ENCODE measurements at regions of chr1 and their contacts with region 1.

Region 1: DNA sequence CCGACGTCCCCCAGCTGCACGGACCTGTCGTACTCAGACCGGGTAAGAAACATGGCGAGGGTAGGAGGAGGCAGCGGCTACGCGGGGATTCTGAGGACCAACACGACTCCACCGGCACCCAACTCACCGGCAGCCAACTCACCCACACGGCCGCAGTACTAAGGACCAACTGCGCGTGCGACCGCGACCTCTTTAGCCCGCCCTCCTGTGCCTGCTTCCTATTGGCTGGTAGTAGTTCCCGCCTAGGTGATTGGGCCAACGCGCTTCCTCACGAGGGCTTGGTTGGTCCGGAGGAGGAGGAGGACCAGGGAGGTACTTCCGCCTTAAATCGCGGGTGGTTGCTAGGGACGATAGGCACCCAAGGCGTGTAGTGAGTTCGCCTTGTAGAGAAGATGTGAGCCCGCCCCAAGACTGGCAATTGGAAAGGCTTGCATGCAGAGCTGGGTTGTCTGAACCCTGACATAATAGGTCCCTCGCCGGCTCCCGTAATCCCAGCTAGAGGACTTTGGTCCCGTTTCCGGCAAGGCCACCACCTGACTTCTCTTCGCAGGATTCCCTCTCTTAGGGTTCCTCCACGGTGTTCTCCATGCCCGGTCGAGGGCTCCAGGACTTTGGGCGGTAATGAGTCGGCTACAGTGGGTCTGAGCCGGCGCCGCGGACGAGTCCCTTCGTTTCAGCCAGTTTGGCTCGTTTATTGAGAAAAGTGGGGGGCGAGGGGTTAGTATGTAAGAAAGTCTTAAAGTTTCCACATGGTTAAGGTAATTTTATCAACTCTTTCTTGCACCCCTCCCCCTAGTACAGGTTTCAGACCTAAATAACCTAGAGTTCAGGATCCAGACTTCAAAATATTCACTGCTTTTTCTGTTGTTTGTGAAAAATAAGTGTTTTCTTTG is at the start of gene PSMA5:
- DNase-seq: peak; percentile 73 to 97 (median 95)
- ATAC-seq: peak; percentile 96
- H3K4me3 ChIP-seq: peak within 1 kb of the TSS; percentile 77
- H3K4me3 Mint-ChIP-seq: peak within 1 kb of the TSS; percentile 95 to 99 (median 98)
- H3K27ac ChIP-seq: peak within 1 kb of the TSS; percentile 91
- H3K27ac Mint-ChIP-seq: peak within 1 kb of the TSS; percentile 80 to 99 (median 98)
- H3K4me1 ChIP-seq: peaks cover 27 to 29% of the 10 kb centered on the region in 2 donors
- H3K4me1 Mint-ChIP-seq: peaks cover 29 to 46% (median 34%) of the 10 kb centered on the region in 7 donors
- H3K27me3 ChIP-seq: no peaks in the 10 kb centered on the region
- H3K27me3 Mint-ChIP-seq: no peaks in the 10 kb centered on the region
- total RNA-seq, gene PSMA5: 38.3 to 203 (median 70.7) TPM

Region 2: DNA sequence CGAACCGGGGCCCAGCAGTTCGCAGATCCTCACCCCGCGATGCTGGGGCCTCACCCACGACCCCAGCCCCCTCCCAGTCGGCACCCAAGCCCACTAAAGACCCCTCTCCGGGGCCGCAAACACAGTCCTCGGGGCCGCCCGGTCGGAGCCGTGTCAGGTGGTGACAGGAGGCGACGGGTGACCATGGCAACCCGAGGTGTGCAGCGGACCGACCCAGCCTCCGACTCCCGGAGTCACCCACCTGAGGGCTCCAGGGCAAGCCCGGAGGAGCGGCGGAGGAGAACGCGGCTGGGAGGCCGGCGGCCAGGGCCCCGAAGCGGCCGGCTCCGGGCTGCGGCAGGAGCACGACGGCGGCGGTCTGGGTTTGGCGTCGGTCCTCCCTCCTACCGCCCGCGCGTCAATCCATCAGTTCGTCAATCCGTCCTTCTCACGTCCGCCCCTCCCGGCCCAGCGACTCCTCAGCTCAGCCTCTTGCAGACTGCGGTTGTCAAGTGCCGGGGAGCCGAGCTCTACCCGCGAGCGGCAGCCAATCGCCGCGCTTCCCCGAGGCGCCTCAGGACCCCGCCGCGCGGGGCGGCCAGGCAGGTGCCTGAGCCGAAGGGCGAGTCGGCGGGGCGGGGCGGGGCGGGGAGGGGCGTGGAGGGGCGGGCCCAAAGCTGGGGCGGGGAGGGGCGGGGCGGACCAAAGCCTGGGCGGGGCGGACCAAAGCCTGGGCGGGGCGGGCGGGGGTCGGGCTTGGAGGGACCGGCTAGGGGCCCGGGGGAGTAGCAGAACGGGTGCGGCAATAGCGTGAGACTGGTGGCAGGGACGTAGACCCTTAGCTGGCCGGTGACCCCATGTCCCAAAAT is 384.7 kb before region 1 on chr1 and contains the start of gene WDR47:
- CTCF ChIA-PET with region 1: no interaction called
- POLR2A ChIA-PET with region 1: no interaction called
- intact Hi-C with region 1: loop called (anchors 1 kb)
- DNase-seq: peak; percentile 95 to 97 (median 96)
- ATAC-seq: peak; percentile 99
- H3K4me3 ChIP-seq: peak within 1 kb of the TSS; percentile 97
- H3K4me3 Mint-ChIP-seq: peak within 1 kb of the TSS; percentile 86 to 97 (median 94)
- H3K27ac ChIP-seq: peak within 1 kb of the TSS; percentile 90
- H3K27ac Mint-ChIP-seq: peak within 1 kb of the TSS; percentile 78 to 97 (median 91)
- H3K4me1 ChIP-seq: peaks cover 0 to 7% of the 10 kb centered on the region in 2 donors
- H3K4me1 Mint-ChIP-seq: peaks cover 7 to 25% (median 16%) of the 10 kb centered on the region in 7 donors
- H3K27me3 ChIP-seq: no peaks in the 10 kb centered on the region
- H3K27me3 Mint-ChIP-seq: peaks cover 0 to 7% (median 0%) of the 10 kb centered on the region in 5 donors
- total RNA-seq, gene WDR47: 9.8 to 15.4 (median 14.4) TPM

Region 3: GRCh38 chr1:109099938-109100773 is 326.4 kb before region 1 on chr1:
- CTCF ChIA-PET with region 1: no interaction called
- POLR2A ChIA-PET with region 1: no interaction called
- intact Hi-C with region 1: loop called in 1 of 2 experiments (anchors 1 kb)
- DNase-seq: peak; percentile 90 to 98 (median 97)
- ATAC-seq: peak; percentile 98
- H3K4me3 ChIP-seq: peak overlapping the region; percentile 80
- H3K4me3 Mint-ChIP-seq: peak overlapping the region; percentile 93 to 99 (median 98)
- H3K27ac ChIP-seq: peak overlapping the region; percentile 88
- H3K27ac Mint-ChIP-seq: peak overlapping the region; percentile 92 to 99 (median 96)
- H3K4me1 ChIP-seq: peaks cover 0 to 5% of the 10 kb centered on the region in 2 donors
- H3K4me1 Mint-ChIP-seq: peaks cover 5 to 22% (median 13%) of the 10 kb centered on the region in 7 donors
- H3K27me3 ChIP-seq: no peaks in the 10 kb centered on the region
- H3K27me3 Mint-ChIP-seq: peaks cover 0 to 2% (median 0%) of the 10 kb centered on the region in 5 donors

Region 4: DNA sequence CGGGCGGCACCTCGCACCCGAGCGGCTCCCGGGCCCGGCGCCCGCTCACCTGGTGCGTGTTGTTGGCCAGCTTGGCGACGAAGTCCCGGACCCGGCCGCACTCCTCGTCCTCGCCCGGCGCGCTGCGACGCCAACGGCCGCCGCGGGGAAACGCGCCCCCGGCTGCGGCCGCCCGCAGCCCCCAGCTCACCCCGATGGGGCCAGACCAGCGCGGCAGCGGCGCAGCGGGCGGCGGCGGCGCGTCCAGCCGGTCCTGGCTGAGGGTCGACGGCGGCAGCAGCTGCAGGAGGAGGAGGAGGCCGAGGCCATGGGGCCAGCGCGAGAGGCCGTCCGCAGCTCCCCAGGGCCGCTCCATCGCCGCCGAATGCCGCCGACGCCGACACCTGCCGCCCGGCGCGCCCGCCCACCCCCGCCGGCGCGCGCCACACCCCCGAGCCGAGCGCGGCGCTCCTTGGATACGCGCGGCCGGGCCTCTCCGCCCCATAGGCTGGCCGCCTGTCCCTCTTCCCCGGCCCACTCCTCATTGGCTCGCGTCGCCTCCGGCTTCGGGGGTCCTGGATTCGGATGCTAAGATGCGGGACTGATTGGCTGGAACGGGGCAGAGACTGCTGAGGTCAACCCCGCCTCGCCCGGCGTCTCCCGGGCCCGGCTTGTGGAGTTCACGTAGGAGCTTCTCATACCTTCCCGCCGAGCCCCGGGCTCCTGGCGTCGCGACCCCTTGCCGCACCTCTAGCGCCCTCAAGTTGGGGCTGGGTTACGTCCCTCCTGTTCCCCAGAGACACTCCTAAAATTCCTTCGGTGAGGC is 28.8 kb before region 1 on chr1 and contains the start of gene SORT1:
- CTCF ChIA-PET with region 1: interaction called, 3 read pairs
- POLR2A ChIA-PET with region 1: no interaction called
- intact Hi-C with region 1: loop called in 1 of 2 experiments (anchors 1 kb)
- DNase-seq: peak; percentile 29 to 67 (median 43)
- ATAC-seq: peak; percentile 94
- H3K4me3 ChIP-seq: peak within 1 kb of the TSS; percentile 37
- H3K4me3 Mint-ChIP-seq: peak within 1 kb of the TSS; percentile 80 to 90 (median 86)
- H3K27ac ChIP-seq: no peak within 1 kb of the TSS
- H3K27ac Mint-ChIP-seq: peak within 1 kb of the TSS in 2 of 9 donors; percentile 43 to 74
- H3K4me1 ChIP-seq: peaks cover 0 to 6% of the 10 kb centered on the region in 2 donors
- H3K4me1 Mint-ChIP-seq: peaks cover 0 to 30% (median 16%) of the 10 kb centered on the region in 7 donors
- H3K27me3 ChIP-seq: peaks cover 0 to 18% of the 10 kb centered on the region in 2 donors
- H3K27me3 Mint-ChIP-seq: peaks cover 36 to 51% (median 41%) of the 10 kb centered on the region in 5 donors
- total RNA-seq, gene SORT1: 1.0 to 25.6 (median 1.8) TPM

Region 5: DNA sequence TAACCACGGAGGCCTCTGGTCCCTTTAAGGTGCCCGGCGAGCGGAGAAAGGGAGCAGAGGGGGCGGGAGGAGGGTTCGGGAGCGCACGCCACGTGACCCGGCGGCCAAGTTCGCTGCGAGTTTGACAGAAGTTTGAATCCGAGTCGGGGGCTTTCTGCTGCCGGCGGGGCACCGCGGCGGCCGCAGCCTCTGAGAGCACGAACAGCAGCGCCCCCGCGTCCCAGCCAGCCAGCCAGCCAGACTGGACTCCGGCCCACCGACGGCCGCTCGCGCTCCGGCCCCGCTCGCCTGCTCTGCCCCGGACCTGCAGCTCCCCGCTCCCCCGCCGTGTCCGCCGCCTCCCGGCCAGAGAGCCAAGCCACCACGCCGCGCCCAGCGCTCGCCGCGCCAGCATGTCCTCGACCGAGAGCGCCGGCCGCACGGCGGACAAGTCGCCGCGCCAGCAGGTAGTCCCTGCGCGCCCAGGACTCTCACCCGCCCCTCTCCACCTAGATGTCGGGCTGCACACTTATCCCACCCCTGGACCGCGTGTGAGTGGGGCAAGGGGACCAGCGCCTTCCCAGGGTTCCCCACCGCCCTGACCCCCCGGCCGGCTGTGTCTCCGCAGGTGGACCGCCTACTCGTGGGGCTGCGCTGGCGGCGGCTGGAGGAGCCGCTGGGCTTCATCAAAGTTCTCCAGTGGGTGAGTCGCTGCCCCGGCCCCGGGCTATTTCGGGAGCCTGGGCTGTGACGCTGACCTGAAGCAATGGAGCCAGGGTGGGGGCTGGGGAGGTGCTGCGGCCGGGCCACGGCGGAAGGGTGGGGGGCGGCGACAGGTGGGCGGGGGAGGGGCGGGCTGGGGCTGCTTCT is 40.2 kb after region 1 on chr1 and contains the start of gene SYPL2:
- CTCF ChIA-PET with region 1: no interaction called
- POLR2A ChIA-PET with region 1: no interaction called
- intact Hi-C with region 1: loop called (anchors 5 kb)
- DNase-seq: peak in 1 of 9 donors; percentile 8
- ATAC-seq: peak; percentile 40
- H3K4me3 ChIP-seq: peak within 1 kb of the TSS; percentile 44
- H3K4me3 Mint-ChIP-seq: peak within 1 kb of the TSS; percentile 45 to 89 (median 84)
- H3K27ac ChIP-seq: no peak within 1 kb of the TSS
- H3K27ac Mint-ChIP-seq: peak within 1 kb of the TSS in 3 of 9 donors; percentile 31 to 73 (median 67)
- H3K4me1 ChIP-seq: peaks cover 0 to 3% of the 10 kb centered on the region in 2 donors
- H3K4me1 Mint-ChIP-seq: peaks cover 0 to 11% (median 7%) of the 10 kb centered on the region in 7 donors
- H3K27me3 ChIP-seq: peaks cover 11 to 16% of the 10 kb centered on the region in 2 donors
- H3K27me3 Mint-ChIP-seq: peaks cover 68 to 90% (median 78%) of the 10 kb centered on the region in 5 donors
- total RNA-seq, gene SYPL2: not detected

Region 6: GRCh38 chr1:109620841-109621286 is 194.3 kb after region 1 on chr1:
- CTCF ChIA-PET with region 1: no interaction called
- POLR2A ChIA-PET with region 1: no interaction called
- intact Hi-C with region 1: loop called (anchors 1 kb)
- DNase-seq: peak; percentile 92 to 98 (median 95)
- ATAC-seq: peak; percentile 90
- H3K4me3 ChIP-seq: peak overlapping the region; percentile 78
- H3K4me3 Mint-ChIP-seq: peak overlapping the region; percentile 90 to 98 (median 94)
- H3K27ac ChIP-seq: peak overlapping the region; percentile 90
- H3K27ac Mint-ChIP-seq: peak overlapping the region; percentile 92 to 98 (median 96)
- H3K4me1 ChIP-seq: peaks cover 14 to 43% of the 10 kb centered on the region in 2 donors
- H3K4me1 Mint-ChIP-seq: peaks cover 52 to 79% (median 68%) of the 10 kb centered on the region in 7 donors
- H3K27me3 ChIP-seq: no peaks in the 10 kb centered on the region
- H3K27me3 Mint-ChIP-seq: no peaks in the 10 kb centered on the region

Region 7: DNA sequence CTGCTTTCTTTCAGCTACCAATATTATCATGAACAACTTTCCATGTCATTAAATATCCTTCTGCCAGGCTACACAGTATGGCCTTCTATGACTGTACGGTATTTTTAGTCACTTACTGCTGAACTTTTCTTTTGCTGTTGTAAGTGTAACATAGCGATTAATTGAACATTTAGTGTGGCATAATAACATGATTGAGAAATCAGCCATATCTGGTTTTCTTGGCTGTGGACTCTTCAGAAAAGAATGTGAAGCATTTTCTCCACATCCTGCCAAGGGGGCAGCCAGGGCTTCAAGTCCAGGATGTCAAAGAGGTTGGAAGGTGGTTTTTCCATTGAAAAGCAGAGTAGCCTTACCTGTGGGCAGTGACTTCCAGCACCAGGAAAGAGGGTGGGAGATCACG is 549.2 kb after region 1 on chr1:
- CTCF ChIA-PET with region 1: no interaction called
- POLR2A ChIA-PET with region 1: no interaction called
- intact Hi-C with region 1: no loop called
- DNase-seq: no peak
- ATAC-seq: no peak
- H3K4me3 ChIP-seq: no peak overlapping the region
- H3K4me3 Mint-ChIP-seq: no peak overlapping the region
- H3K27ac ChIP-seq: no peak overlapping the region
- H3K27ac Mint-ChIP-seq: no peak overlapping the region
- H3K4me1 ChIP-seq: no peaks in the 10 kb centered on the region
- H3K4me1 Mint-ChIP-seq: no peaks in the 10 kb centered on the region
- H3K27me3 ChIP-seq: no peaks in the 10 kb centered on the region
- H3K27me3 Mint-ChIP-seq: peaks cover 11 to 28% (median 16%) of the 10 kb centered on the region in 5 donors

Region 8: DNA sequence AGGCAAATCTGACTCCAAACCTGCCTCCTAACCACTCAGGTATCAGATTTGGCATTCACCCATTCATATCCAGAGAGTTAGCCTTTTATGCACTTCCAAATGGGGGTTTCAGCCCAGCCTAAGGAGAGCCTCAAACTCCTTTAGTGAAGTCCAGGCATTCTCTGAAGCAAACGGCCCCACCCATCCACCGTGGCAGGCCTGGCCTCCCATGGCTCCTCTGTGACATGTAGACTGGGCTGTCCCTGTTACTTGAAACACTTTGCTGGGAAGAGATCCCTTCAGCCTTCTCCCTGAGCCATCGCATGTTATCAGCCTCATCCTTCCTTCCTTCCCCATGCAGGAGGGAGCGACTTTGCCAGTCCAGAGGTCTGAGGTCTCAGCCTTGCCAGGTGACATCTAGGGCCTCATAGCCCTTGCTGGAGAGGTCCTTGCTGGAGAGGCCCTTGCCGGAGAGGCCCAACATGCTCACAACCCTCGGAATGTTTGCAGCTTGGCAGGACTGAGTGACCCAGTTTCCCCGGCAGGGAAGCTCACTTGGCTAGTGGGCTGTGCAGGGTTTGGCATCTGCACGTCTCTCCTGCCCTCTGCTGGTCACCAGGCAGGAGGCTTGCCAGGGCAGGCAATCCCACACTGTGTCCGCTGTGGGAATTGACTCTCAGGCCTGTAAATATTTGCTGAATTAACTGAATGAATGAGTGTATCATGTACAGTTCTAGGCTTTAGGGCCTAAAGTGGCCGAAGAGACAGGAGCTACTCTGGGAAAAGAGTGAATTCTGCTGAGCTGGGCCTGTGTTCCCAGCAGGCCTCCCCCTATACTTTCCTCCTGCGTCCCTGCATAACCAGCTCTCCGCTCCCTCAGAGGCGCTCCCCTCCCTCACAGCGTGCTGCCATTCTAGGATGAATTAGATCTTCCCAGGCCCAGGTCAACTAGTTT is 885.9 kb after region 1 on chr1:
- CTCF ChIA-PET with region 1: no interaction called
- POLR2A ChIA-PET with region 1: no interaction called
- intact Hi-C with region 1: no loop called
- DNase-seq: peak; percentile 51 to 80 (median 71)
- ATAC-seq: peak; percentile 95
- H3K4me3 ChIP-seq: no peak overlapping the region
- H3K4me3 Mint-ChIP-seq: no peak overlapping the region
- H3K27ac ChIP-seq: no peak overlapping the region
- H3K27ac Mint-ChIP-seq: peak overlapping the region in 1 of 9 donors; percentile 14
- H3K4me1 ChIP-seq: peaks cover 0 to 5% of the 10 kb centered on the region in 2 donors
- H3K4me1 Mint-ChIP-seq: peaks cover 0 to 2% (median 0%) of the 10 kb centered on the region in 7 donors
- H3K27me3 ChIP-seq: no peaks in the 10 kb centered on the region
- H3K27me3 Mint-ChIP-seq: no peaks in the 10 kb centered on the region

Region 9: GRCh38 chr1:110407260-110408210 is 981.0 kb after region 1 on chr1 and contains the start of gene LAMTOR5:
- CTCF ChIA-PET with region 1: no interaction called
- POLR2A ChIA-PET with region 1: no interaction called
- intact Hi-C with region 1: loop called in 1 of 2 experiments (anchors 5 kb)
- DNase-seq: peak; percentile 77 to 91 (median 89)
- ATAC-seq: peak; percentile 98
- H3K4me3 ChIP-seq: peak within 1 kb of the TSS; percentile 95
- H3K4me3 Mint-ChIP-seq: peak within 1 kb of the TSS; percentile 88 to 100 (median 99)
- H3K27ac ChIP-seq: peak within 1 kb of the TSS; percentile 92
- H3K27ac Mint-ChIP-seq: peak within 1 kb of the TSS; percentile 96 to 100 (median 99)
- H3K4me1 ChIP-seq: peaks cover 19% of the 10 kb centered on the region in 2 donors
- H3K4me1 Mint-ChIP-seq: peaks cover 9 to 39% (median 27%) of the 10 kb centered on the region in 7 donors
- H3K27me3 ChIP-seq: no peaks in the 10 kb centered on the region
- H3K27me3 Mint-ChIP-seq: no peaks in the 10 kb centered on the region
- total RNA-seq, gene LAMTOR5: 63.3 to 146 (median 69.4) TPM

Measured in naive thymus-derived CD4-positive, alpha-beta T cell (primary cell).